Transverse colon (tissue), 4 donors: ENCODE measurements at regions of chr2 and their contacts with region 1.

Region 1: DNA sequence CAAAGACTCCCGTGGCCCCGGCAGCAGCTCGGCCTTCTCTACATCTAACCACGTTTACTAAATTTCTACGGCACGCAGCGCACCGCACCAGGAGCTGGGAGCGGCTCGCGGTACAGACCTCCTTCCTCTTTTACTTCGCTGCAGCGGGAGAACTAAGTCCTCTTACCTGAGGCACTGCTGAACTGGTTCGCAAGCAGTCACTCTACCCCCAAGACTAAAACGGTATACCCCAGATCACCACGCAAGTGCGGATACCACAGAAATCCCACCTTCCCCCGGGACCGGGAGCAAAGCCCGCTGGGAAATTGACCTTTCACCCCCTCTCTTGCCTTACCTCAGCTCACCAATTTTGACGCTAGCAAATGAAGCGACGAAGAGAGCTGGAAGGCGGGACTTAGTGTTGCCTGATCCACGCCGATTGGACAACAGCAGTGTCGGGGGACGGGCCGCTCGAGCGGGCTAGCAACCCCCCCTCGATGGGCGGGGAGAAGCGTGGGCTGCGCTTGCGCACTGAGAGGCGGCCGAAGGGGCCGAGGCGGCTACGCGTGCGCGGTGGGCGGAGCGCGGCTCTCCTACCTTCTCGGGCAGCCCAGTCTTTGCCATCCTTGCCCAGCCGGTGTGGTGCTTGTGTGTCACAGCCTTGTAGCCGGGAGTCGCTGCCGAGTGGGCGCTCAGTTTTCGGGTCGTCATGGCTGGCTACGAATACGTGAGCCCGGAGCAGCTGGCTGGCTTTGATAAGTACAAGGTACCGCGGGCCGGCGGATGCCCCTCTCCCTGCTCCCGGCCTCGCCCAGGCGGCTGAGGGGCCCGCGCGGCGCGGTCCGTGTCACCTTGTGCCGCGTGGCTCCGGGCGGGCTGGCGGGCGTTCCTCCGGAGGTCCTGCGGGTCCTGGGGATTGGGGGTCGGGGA is at the start of gene SELENOI:
- DNase-seq: peak; percentile 99
- H3K4me3 ChIP-seq: peak within 1 kb of the TSS; percentile 83 to 91 (median 90)
- H3K27ac ChIP-seq: peak within 1 kb of the TSS; percentile 94 to 98 (median 98)
- H3K4me1 ChIP-seq: peaks cover 21 to 33% (median 23%) of the 10 kb centered on the region in 4 donors
- H3K27me3 ChIP-seq: no peaks in the 10 kb centered on the region
- CTCF ChIP-seq: no peak
- EP300 ChIP-seq: no peak
- POLR2A ChIP-seq: peak; percentile 95
- total RNA-seq, gene SELENOI: 12.1 to 37.4 (median 26.9) TPM

Region 2: GRCh38 chr2:25376750-25377621 is 968.8 kb before region 1 on chr2:
- in situ Hi-C with region 1: no loop called
- intact Hi-C with region 1: no loop called
- DNase-seq: peak; percentile 91
- H3K4me3 ChIP-seq: peak overlapping the region in 1 of 4 donors; percentile 10
- H3K27ac ChIP-seq: peak overlapping the region; percentile 45 to 60 (median 52)
- H3K4me1 ChIP-seq: peaks cover 6 to 20% (median 13%) of the 10 kb centered on the region in 4 donors
- H3K27me3 ChIP-seq: no peaks in the 10 kb centered on the region
- CTCF ChIP-seq: peak; percentile 53 to 97 (median 89)
- EP300 ChIP-seq: no peak
- POLR2A ChIP-seq: no peak

Region 3: DNA sequence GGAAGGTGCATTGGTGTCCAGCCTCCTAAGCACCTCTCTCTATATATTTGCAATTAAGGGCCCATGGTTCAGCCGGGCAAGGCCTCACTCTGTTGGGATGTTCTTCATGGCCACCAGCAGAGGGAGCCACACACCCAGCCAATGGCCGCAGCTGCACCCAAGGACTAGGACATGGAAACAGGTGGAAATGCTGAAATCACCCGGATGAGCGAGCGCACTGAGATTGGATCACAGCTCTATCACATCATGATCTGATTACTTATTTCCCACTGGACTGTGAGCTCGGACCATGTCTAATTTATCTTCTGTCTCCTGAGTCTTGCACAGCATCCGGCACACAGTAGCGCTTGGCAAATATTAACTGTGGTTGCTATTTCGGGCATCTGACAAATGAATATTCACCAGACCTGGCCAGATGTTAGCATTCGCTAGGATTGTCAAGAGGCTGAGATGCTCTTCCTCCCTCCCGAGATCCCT is 394.7 kb before region 1 on chr2:
- in situ Hi-C with region 1: loop called in 2 of 4 experiments (anchors 25 kb)
- intact Hi-C with region 1: no loop called
- DNase-seq: peak; percentile 84
- H3K4me3 ChIP-seq: no peak overlapping the region
- H3K27ac ChIP-seq: no peak overlapping the region
- H3K4me1 ChIP-seq: no peaks in the 10 kb centered on the region
- H3K27me3 ChIP-seq: no peaks in the 10 kb centered on the region
- CTCF ChIP-seq: peak; percentile 89 to 96 (median 91)
- EP300 ChIP-seq: no peak
- POLR2A ChIP-seq: no peak

Region 4: DNA sequence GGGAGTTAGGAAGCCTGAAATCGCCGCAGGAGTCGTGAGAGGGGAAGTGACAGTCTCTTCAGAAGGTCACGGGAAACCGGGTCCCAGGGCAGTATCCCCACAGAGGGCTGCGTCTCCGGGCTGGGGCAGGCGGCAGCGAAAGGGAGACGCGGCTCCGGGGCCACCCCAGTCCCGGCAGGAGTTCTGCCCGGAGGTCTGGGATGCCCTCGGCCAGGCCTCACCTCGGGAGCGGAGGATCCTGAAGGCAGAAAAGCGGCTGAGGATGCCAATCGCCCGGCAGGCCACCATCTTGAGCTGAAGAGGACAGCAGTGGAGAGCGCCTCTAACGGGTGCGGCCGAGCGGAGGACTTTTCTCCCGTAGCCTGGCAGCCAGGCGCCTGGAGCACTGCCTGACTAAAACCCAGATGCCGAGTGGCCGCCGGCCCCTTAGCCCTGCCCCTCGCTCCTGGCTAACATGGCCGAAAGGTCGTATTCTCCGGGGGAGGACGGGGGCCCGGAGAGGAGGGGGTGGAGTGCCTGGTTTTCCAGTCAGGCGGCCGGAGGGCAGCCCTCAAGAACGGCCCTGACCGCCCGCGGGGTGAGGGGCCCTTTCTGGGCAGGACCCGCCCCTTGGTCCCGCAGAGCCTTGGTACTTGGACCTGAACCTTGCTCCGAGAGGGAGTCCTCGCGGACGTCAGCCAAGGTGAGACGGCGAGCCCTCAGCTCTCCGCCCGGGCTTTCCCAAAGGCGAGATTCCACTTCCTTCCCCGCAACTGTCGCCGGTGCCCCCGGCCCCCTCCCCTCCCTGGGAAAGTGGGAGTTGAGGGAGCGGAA is 101.3 kb before region 1 on chr2 and contains the starts of genes HADHA and HADHB:
- in situ Hi-C with region 1: loop called in 1 of 4 experiments (anchors 25 kb)
- intact Hi-C with region 1: no loop called
- DNase-seq: peak; percentile 94
- H3K4me3 ChIP-seq: peak within 1 kb of the TSS; percentile 73 to 90 (median 78)
- H3K27ac ChIP-seq: peak within 1 kb of the TSS; percentile 86 to 97 (median 92)
- H3K4me1 ChIP-seq: peaks cover 21 to 69% (median 49%) of the 10 kb centered on the region in 4 donors
- H3K27me3 ChIP-seq: no peaks in the 10 kb centered on the region
- CTCF ChIP-seq: peak in 3 of 5 experiments; percentile 16 to 53 (median 46)
- EP300 ChIP-seq: peak; percentile 29
- POLR2A ChIP-seq: peak; percentile 91
- total RNA-seq, gene HADHA: 92.8 to 233 (median 142) TPM
- total RNA-seq, gene HADHB: 53.1 to 182 (median 133) TPM

Region 5: DNA sequence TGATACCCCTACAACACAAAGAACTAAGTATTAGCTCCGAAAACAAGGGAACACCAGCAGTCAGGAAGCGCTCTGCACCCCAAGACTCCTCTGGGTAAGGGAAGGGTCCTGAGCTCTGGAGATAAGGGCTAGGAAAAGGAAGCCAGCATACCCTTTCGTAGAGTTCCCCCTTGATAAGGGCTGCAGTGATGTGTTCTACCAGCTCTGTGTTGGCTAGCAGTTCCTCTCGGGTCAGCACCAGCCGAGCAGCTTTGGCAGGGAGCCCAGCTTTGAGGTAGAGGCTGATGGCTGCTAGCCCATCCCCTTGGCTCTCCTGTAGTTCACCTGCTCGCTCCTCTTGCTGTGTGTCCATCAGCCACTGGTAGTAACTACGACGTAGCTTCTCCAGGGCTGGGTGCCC is 1115.3 kb after region 1 on chr2:
- in situ Hi-C with region 1: no loop called
- intact Hi-C with region 1: no loop called
- DNase-seq: no peak
- H3K4me3 ChIP-seq: no peak overlapping the region
- H3K27ac ChIP-seq: no peak overlapping the region
- H3K4me1 ChIP-seq: no peaks in the 10 kb centered on the region
- H3K27me3 ChIP-seq: no peaks in the 10 kb centered on the region
- CTCF ChIP-seq: no peak
- EP300 ChIP-seq: no peak
- POLR2A ChIP-seq: no peak